Kidney (tissue), 22 donors: ENCODE measurements at regions of chr12 and their contacts with region 1.

Region 1: GRCh38 chr12:56766535-56766934 is 3.4 kb downstream of the HSD17B6 start:
- DNase-seq: no peak
- H3K4me3 ChIP-seq: no peak overlapping the region
- H3K27ac ChIP-seq: no peak overlapping the region
- H3K4me1 ChIP-seq: no peaks in the 10 kb centered on the region
- H3K27me3 ChIP-seq: no peaks in the 10 kb centered on the region
- CTCF ChIP-seq: no peak

Region 2: GRCh38 chr12:56998981-56999380 is 232.4 kb after region 1 on chr12:
- intact Hi-C with region 1: loop called (anchors 10 kb)
- DNase-seq: no peak
- H3K4me3 ChIP-seq: no peak overlapping the region
- H3K27ac ChIP-seq: no peak overlapping the region
- H3K4me1 ChIP-seq: peaks cover 0 to 9% (median 6%) of the 10 kb centered on the region in 3 donors
- H3K27me3 ChIP-seq: no peaks in the 10 kb centered on the region
- CTCF ChIP-seq: no peak